ENCODE measurements at regions of chr11 and their contacts with region 1.

Region 1: GRCh38 chr11:18132341-18132740 is at the start of gene MRGPRX3:
- DNase-seq: no peak
- ATAC-seq: no peak
- total RNA-seq, gene MRGPRX3: not detected

Region 2: DNA sequence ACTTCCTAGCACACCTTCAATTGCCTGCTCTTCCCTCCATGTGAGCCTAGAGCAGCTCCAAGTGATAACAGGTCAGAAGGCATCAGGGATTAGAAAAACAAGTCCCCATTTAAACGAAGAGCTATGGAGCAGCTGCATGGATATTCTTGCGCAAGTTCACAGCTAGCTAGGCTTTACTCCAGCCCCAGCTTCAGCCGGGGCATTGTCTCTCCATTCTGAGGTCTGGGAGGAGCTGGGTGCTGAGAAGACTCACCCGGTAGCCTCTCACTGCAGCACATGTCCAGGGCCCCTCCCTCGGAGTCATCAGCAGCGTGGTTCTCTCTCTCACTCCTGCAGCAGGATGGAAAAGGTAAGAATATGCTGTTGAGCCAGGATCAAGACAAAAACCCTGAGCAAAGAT is 633.2 kb after region 1 on chr11:
- intact Hi-C with region 1: loop called (anchors 2 kb)
- DNase-seq: no peak
- ATAC-seq: no peak

Region 3: GRCh38 chr11:18834754-18835466 is 702.6 kb after region 1 on chr11:
- intact Hi-C with region 1: loop called (anchors 5 kb)
- DNase-seq: no peak
- ATAC-seq: no peak

Measured in sciatic nerve (tissue), 2 donors.